ENCODE measurements at regions of chr17 and their contacts with region 1.

Region 1: GRCh38 chr17:57255776-57256681 is at the start of gene MSI2:
- DNase-seq: peak; percentile 87 to 94 (median 92)
- H3K4me3 ChIP-seq: peak within 1 kb of the TSS; percentile 49 to 95 (median 86)
- H3K27ac ChIP-seq: peak within 1 kb of the TSS; percentile 52 to 99 (median 97)
- H3K27me3 ChIP-seq: no peaks in the 10 kb centered on the region
- CTCF ChIP-seq: peak in 5 of 56 donors; percentile 9 to 38 (median 16)
- total RNA-seq, gene MSI2: 86.3 to 279 (median 141) TPM

Region 2: DNA sequence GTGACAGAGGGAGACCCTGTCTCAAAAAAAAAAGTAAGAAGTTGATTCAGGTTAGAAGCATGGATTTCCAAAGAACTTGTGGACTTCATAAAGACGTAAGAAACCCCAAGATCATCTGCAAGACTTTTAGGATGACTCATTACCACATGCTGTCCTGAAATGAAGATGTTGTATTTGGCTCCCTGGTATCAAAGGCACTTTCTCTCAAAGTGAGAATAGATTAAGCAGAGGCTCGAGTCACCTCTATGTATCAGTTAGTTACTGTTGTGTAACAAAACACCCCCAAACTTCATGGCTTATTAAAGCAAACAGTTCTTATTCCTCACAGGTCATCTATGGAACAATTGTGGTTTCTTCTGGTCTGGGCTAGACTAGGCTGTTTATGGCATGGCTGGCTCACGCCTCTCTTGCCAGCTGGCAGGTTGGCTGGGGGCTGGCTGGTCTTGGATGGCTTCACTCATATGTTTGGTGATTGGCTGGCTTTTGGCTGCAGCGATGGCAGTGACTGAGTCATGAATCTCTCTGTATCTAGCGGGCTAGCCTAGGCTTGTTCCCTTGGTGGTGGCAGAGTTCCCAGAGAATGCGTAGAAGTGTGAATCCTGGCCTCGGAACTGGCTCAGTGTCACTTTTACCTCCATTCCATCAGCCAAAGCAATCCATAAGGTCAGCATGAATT is 60.1 kb before region 1 on chr17:
- intact Hi-C with region 1: no loop called
- DNase-seq: no peak
- H3K4me3 ChIP-seq: no peak overlapping the region
- H3K27ac ChIP-seq: no peak overlapping the region
- H3K27me3 ChIP-seq: peaks cover 0 to 4% (median 0%) of the 10 kb centered on the region in 45 donors
- CTCF ChIP-seq: no peak

Region 3: GRCh38 chr17:57401556-57402488 is 145.8 kb after region 1 on chr17:
- intact Hi-C with region 1: loop called (anchors 5 kb)
- DNase-seq: no peak
- H3K4me3 ChIP-seq: no peak overlapping the region
- H3K27ac ChIP-seq: peak overlapping the region in 37 of 59 donors; percentile 3 to 81 (median 44)
- H3K27me3 ChIP-seq: no peaks in the 10 kb centered on the region
- CTCF ChIP-seq: peak in 2 of 56 donors; percentile 13 to 14

Region 4: GRCh38 chr17:57408071-57408811 is 152.2 kb after region 1 on chr17:
- intact Hi-C with region 1: loop called (anchors 5 kb)
- DNase-seq: peak in 1 of 10 donors; percentile 20
- H3K4me3 ChIP-seq: peak overlapping the region in 29 of 59 donors; percentile 4 to 50 (median 25)
- H3K27ac ChIP-seq: peak overlapping the region in 56 of 59 donors; percentile 17 to 89 (median 75)
- H3K27me3 ChIP-seq: no peaks in the 10 kb centered on the region
- CTCF ChIP-seq: no peak

Region 5: GRCh38 chr17:57440522-57441485 is 184.8 kb after region 1 on chr17:
- intact Hi-C with region 1: loop called in 1 of 2 experiments (anchors 10 kb)
- DNase-seq: peak; percentile 58 to 89 (median 76)
- H3K4me3 ChIP-seq: peak overlapping the region in 15 of 59 donors; percentile 3 to 36 (median 16)
- H3K27ac ChIP-seq: peak overlapping the region; percentile 34 to 95 (median 84)
- H3K27me3 ChIP-seq: no peaks in the 10 kb centered on the region
- CTCF ChIP-seq: peak in 54 of 56 donors; percentile 37 to 79 (median 66)

Region 6: GRCh38 chr17:57604771-57605674 is 349.0 kb after region 1 on chr17:
- intact Hi-C with region 1: loop called in 1 of 2 experiments (anchors 10 kb)
- DNase-seq: peak; percentile 23 to 67 (median 56)
- H3K4me3 ChIP-seq: peak overlapping the region in 49 of 59 donors; percentile 3 to 58 (median 28)
- H3K27ac ChIP-seq: peak overlapping the region; percentile 8 to 88 (median 74)
- H3K27me3 ChIP-seq: no peaks in the 10 kb centered on the region
- CTCF ChIP-seq: peak in 8 of 56 donors; percentile 10 to 21 (median 16)

Region 7: GRCh38 chr17:57662644-57663308 is 406.7 kb after region 1 on chr17:
- intact Hi-C with region 1: loop called (anchors 5 kb)
- DNase-seq: peak; percentile 98 to 100 (median 99)
- H3K4me3 ChIP-seq: peak overlapping the region in 58 of 59 donors; percentile 9 to 69 (median 52)
- H3K27ac ChIP-seq: peak overlapping the region; percentile 71 to 99 (median 94)
- H3K27me3 ChIP-seq: no peaks in the 10 kb centered on the region
- CTCF ChIP-seq: peak in 27 of 56 donors; percentile 6 to 47 (median 28)

Region 8: DNA sequence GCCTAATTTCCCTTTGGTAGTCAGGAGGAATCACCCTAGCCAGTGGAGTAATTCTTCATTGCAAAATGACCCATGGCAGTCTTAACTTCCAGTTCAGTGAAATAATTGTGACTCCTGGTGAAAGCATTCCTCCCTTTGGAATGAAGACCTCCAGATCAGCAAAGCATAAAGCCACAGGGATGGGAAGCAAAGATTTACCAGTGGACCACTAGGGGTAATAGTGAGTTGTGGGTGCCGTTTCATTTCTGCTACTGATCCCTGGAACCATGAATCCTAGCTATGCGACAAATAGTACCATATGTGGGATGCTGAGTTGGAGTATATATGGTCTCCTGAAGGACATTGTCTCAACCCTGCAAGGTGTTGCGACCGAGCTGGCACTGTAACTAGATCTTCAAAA is 840.9 kb after region 1 on chr17:
- intact Hi-C with region 1: no loop called
- DNase-seq: no peak
- H3K4me3 ChIP-seq: no peak overlapping the region
- H3K27ac ChIP-seq: no peak overlapping the region
- H3K27me3 ChIP-seq: no peaks in the 10 kb centered on the region
- CTCF ChIP-seq: no peak